Calu3 (cell line): ENCODE measurements at regions of chr1 and their contacts with region 1.

Region 1: DNA sequence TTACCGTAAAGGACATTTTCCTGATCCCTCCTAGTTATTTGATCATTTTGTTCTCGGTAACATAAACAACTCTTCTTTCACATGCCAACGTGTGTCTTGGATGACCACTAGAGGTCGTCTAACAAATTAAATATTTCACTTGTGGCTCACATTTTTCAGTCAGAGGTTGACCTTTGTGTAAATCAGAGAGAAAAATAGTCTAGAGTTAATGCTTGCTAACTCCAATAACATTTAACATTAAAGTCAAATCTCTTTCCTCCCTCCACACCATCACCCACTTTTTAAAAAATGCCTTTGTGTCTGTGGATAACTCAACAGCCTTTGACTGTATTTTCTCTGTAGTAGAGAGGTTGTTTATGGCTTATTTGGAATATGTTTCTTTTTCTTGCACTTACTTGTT is 220.5 kb upstream of the B3GALT2 start:
- DNase-seq: no peak
- H3K4me3 Mint-ChIP-seq: no peak overlapping the region
- H3K27ac Mint-ChIP-seq: peak overlapping the region; percentile 23
- H3K4me1 Mint-ChIP-seq: peaks cover 57% of the 10 kb centered on the region
- H3K27me3 Mint-ChIP-seq: no peaks in the 10 kb centered on the region
- CTCF ChIP-seq: peak; percentile 49

Region 2: DNA sequence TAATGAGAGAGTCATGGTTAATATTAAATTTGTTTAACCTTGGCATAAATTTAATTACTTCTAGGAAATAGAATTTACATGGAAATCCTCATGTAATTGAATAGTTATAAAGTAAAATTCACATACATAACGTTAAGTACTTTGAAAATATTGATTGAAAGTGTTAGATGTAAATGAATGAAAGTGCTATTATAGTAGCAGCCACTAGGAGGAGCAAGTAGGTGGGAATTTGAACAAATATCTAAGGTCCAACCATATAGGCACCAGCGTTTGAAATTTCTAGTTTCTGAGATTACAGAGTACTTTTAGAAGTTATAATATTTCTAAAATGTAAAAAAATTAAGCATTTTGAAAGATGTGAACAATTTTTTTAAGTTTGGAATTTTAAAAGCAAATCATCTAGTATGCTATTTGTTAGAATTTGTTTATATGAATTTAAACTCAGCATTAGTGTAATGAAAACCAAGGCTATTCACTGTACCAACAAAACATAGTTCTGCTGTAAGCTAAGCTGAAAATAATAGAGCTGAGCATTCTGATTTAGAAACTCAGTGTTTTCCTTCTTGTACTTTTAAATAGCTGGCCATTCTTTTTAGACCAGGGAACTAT is 223.8 kb before region 1 on chr1:
- CTCF ChIA-PET with region 1: no interaction called
- intact Hi-C with region 1: loop called (anchors 2 kb)
- DNase-seq: peak; percentile 39
- H3K4me3 Mint-ChIP-seq: no peak overlapping the region
- H3K27ac Mint-ChIP-seq: no peak overlapping the region
- H3K4me1 Mint-ChIP-seq: peaks cover 28% of the 10 kb centered on the region
- H3K27me3 Mint-ChIP-seq: no peaks in the 10 kb centered on the region
- CTCF ChIP-seq: peak; percentile 65

Region 3: DNA sequence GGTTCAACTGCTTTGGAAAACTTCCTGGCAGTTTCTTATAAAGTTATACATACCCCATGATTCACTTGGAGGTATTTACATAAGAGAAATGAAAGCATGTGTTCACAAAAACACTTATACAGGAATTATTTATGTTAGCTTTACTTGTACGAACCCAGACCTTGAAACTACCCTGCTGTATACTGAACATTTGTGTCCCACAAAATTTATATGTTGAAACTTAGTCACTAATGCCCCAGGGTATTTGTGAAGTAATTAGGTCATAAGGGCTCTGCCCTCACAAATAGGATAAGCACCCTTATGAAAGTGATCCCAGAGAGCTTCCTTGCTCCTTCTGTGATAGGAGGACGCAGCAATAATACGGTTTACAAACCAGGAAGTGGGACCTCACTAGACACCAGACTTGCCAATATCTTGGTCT is 177.8 kb before region 1 on chr1:
- CTCF ChIA-PET with region 1: no interaction called
- intact Hi-C with region 1: no loop called
- DNase-seq: no peak
- H3K4me3 Mint-ChIP-seq: no peak overlapping the region
- H3K27ac Mint-ChIP-seq: no peak overlapping the region
- H3K4me1 Mint-ChIP-seq: no peaks in the 10 kb centered on the region
- H3K27me3 Mint-ChIP-seq: no peaks in the 10 kb centered on the region
- CTCF ChIP-seq: no peak

Region 4: DNA sequence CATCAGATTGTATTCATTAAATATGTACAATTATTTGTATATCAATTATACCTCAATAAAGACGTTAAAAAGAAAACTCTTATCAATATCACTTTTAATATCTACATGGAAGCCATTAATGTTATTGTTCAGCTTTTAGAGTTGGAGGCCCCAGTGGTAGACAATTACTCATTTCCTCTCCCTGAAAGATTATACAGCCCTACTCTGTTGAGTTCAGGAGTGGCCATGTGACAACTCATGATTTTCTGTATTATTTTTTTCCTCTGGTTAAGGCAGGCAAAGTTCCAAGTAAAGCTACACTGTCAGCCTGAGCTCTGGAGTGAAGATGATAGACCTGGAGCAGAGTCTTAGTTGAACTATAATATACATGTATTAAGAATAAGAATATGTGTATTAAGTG is 27.4 kb after region 1 on chr1:
- CTCF ChIA-PET with region 1: no interaction called
- intact Hi-C with region 1: loop called (anchors 2 kb)
- DNase-seq: no peak
- H3K4me3 Mint-ChIP-seq: no peak overlapping the region
- H3K27ac Mint-ChIP-seq: no peak overlapping the region
- H3K4me1 Mint-ChIP-seq: peaks cover 32% of the 10 kb centered on the region
- H3K27me3 Mint-ChIP-seq: no peaks in the 10 kb centered on the region
- CTCF ChIP-seq: no peak

Region 5: GRCh38 chr1:193558491-193559028 is 151.7 kb after region 1 on chr1:
- CTCF ChIA-PET with region 1: no interaction called
- intact Hi-C with region 1: loop called (anchors 2 kb)
- DNase-seq: peak; percentile 72
- H3K4me3 Mint-ChIP-seq: no peak overlapping the region
- H3K27ac Mint-ChIP-seq: peak overlapping the region; percentile 10
- H3K4me1 Mint-ChIP-seq: peaks cover 28% of the 10 kb centered on the region
- H3K27me3 Mint-ChIP-seq: no peaks in the 10 kb centered on the region
- CTCF ChIP-seq: no peak

Region 6: DNA sequence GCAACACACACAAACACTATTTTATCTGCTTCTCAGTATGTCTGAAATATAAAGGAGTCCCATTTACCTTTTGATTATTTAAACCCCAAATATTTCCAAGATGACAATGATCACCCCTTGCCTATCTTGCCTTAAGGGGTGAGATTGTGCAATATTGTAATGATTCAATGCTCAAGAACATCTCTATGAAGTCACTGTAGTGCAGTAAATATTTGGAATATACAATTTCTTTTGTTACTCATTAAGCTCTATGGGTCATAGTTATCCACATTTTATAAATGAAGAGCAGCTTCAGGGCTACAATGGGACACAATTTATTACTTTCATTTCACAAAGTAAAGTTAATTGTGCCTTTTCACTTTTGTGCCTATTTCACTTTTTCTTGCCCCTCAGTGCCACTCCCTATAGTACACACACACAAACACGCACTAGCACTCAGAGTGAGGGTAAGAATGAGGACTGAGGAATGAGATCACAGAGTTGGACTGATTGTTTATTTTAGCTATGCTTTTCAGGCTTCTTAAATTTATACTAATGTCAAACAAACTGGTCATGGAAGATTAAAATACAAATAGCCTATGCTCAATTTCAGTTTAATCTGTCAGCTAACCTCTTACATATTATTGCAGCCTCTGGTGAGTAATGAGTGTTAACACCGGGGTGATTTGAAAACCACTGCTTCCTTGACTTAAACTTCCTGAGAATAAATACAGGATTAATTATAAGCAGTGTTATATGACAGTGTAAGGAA is 300.5 kb after region 1 on chr1:
- CTCF ChIA-PET with region 1: no interaction called
- intact Hi-C with region 1: loop called (anchors 5 kb)
- DNase-seq: no peak
- H3K4me3 Mint-ChIP-seq: no peak overlapping the region
- H3K27ac Mint-ChIP-seq: peak overlapping the region; percentile 26
- H3K4me1 Mint-ChIP-seq: peaks cover 8% of the 10 kb centered on the region
- H3K27me3 Mint-ChIP-seq: no peaks in the 10 kb centered on the region
- CTCF ChIP-seq: no peak

Region 7: GRCh38 chr1:193785850-193786420 is 379.0 kb after region 1 on chr1:
- CTCF ChIA-PET with region 1: no interaction called
- intact Hi-C with region 1: loop called (anchors 10 kb)
- DNase-seq: no peak
- H3K4me3 Mint-ChIP-seq: no peak overlapping the region
- H3K27ac Mint-ChIP-seq: no peak overlapping the region
- H3K4me1 Mint-ChIP-seq: peaks cover 18% of the 10 kb centered on the region
- H3K27me3 Mint-ChIP-seq: no peaks in the 10 kb centered on the region
- CTCF ChIP-seq: no peak